GM10248 (cell line): ENCODE measurements at regions of chr1 and their contacts with region 1.

Region 1: DNA sequence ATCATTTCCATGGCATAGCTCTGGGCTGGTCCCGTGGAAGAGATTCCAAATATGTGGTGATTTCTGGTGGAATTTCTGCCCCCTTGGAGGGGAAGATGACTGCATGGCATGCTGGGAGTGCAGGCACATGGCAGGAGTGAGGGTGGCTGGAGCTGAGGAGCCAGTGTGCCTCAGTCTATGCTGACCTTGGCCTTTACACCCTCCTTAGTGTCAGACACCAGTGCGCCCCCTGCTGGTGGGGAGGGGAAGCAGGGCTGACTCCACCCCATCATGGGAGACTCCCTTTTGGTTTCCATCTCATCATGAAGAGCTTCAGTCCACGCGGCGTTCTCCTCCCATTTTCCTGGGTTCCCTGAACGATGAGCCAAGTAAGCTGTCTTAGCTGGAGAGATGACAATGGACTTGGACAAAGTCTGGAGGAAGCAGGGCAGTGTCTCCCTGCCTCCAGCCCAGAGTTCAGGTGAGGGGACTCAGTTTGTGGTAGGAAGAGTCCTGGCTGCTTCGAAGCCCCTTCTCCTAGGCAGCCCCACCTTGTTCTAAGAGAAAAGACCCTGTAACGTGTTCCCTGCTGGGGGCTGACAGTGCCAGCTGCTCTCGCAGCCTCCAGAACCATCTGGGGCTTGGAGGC is 10.3 kb downstream of the ALX3 start:
- DNase-seq: peak; percentile 83
- CTCF ChIP-seq: peak; percentile 87

Region 2: DNA sequence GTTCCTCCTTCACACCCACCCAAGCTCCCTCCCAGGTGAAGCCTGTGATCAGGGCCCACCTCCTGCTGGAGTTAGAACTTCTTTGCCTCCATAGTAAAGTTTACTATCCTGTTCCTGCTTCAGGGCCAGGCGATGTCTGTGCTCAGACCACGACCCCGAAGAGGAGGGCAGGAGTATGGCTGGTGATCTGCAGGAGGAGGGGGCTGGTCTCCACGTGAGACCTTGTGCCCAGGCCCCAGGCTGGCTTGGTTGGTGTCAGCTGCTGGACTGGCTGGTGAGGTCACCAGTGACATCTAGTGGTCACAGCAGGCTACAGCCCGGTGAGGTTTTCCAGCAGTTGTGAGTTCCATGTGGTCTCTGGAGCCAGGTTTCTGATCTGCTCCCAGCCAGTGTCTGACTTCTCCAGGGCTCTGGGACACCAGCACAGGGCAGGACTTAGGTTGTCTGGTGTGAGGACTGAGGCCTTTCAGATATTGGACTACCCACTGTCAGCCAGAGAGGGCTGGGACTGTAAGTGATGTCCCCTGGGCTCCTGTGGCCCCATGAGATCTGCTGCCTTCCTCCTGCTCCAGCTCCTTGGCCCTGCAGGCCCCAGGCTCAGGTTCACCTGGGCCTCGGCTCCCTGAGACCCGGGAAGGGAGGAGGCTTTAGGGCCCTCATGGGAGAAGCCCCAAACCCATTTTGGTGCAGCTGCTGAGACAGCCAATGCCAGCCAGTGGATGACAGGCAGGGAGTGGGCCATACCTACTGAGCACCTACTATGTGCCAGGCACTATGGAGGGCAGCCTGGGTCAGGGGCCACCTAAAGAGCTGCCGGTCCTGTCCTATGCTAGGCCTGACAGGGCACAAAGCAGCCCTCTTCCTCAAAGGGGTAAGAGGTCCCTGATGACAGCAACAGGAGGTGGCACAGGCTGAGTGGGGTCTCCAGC is 46.1 kb after region 1 on chr1:
- CTCF ChIA-PET with region 1: interaction called, 112 read pairs
- POLR2A ChIA-PET with region 1: no interaction called
- DNase-seq: peak; percentile 85
- CTCF ChIP-seq: peak; percentile 96